Common myeloid progenitor, CD34-positive (primary cell): ENCODE measurements at regions of chr3 and their contacts with region 1.

Region 1: GRCh38 chr3:36957862-36958686 is 13.2 kb upstream of the TRANK1 start:
- DNase-seq: peak in 2 of 3 donors; percentile 25 to 40
- H3K4me3 ChIP-seq: no peak overlapping the region
- H3K27ac ChIP-seq: peak overlapping the region in 1 of 2 experiments; percentile 62
- H3K4me1 ChIP-seq: peaks cover 0 to 8% (median 2%) of the 10 kb centered on the region in 4 experiments
- H3K27me3 ChIP-seq: no peaks in the 10 kb centered on the region

Region 2: DNA sequence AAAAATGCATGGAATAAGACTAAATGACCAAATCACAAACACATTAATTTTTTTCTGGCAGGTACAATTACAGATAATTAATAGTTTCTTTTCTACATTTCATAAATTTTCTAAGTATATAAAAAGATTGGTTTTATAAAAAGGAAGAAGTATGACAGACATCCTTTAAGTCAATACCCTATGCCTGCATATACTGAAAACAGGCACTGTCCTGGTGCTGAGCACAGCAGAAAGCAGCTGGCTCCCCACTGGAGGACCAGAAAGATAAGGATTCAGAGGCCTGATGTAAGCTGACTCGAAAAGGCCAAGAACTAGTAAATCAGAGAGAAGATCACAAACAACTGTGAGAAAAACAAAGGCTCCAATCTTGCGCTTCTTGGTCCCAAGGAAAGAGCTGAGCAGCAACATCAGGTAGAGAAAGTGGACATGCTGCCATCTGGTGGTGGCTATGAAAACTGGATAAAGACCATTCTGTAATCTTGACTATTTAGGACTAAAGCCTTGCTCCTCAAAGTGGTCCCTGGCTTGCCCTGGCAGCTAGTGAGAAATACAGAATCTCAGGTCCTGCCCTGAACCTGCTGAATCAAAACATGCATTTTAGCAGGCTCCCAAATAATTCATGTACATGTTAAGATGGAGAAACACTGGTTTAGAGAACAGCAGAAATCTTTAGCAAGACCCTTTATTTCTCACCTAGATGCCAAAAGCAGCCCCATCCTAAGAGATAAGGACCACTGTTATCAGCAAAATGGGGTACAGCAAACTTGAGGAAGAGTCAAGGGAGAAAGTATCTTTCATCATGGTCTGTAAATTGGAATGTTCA is 89.2 kb before region 1 on chr3:
- CTCF ChIA-PET with region 1: interaction called, 12 read pairs
- POLR2A ChIA-PET with region 1: no interaction called
- DNase-seq: peak; percentile 65 to 84 (median 73)
- H3K4me3 ChIP-seq: no peak overlapping the region
- H3K27ac ChIP-seq: no peak overlapping the region
- H3K4me1 ChIP-seq: peaks cover 5 to 18% (median 10%) of the 10 kb centered on the region in 4 experiments
- H3K27me3 ChIP-seq: no peaks in the 10 kb centered on the region

Region 3: DNA sequence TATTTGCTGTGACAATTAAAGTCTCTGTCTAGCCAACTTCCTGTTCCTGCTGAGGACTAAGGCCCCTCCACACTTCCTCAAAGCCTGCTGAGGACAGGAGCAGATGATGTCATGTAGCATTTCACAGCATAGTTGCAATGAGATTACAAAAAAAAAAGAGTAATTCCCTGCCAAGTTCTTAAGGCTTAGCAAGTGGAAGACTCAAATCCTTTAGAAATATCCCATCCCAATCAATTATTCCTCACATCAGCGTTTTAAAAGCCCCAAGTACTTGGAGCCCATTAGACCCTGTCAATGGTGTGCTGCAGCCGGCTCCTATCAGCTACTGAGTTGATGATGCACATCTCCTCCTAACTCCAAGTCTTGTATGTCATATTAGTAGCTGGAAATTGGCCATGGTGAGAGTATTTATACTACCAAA is 64.9 kb before region 1 on chr3:
- CTCF ChIA-PET with region 1: interaction called, 14 read pairs
- POLR2A ChIA-PET with region 1: no interaction called
- DNase-seq: peak; percentile 47 to 84 (median 73)
- H3K4me3 ChIP-seq: no peak overlapping the region
- H3K27ac ChIP-seq: peak overlapping the region in 1 of 2 experiments; percentile 45
- H3K4me1 ChIP-seq: peaks cover 8 to 28% (median 17%) of the 10 kb centered on the region in 4 experiments
- H3K27me3 ChIP-seq: no peaks in the 10 kb centered on the region

Region 4: GRCh38 chr3:36911990-36912804 is 45.9 kb before region 1 on chr3:
- CTCF ChIA-PET with region 1: interaction called, 92 read pairs
- POLR2A ChIA-PET with region 1: interaction called, 5 read pairs
- DNase-seq: peak; percentile 84 to 97 (median 94)
- H3K4me3 ChIP-seq: peak overlapping the region in 6 of 7 experiments; percentile 38 to 71 (median 48)
- H3K27ac ChIP-seq: peak overlapping the region; percentile 47 to 84
- H3K4me1 ChIP-seq: peaks cover 29 to 43% (median 36%) of the 10 kb centered on the region in 4 experiments
- H3K27me3 ChIP-seq: no peaks in the 10 kb centered on the region

Region 5: GRCh38 chr3:36923523-36923943 is 34.5 kb before region 1 on chr3:
- CTCF ChIA-PET with region 1: interaction called, 39 read pairs
- POLR2A ChIA-PET with region 1: no interaction called
- DNase-seq: peak in 2 of 3 donors; percentile 34 to 63
- H3K4me3 ChIP-seq: peak overlapping the region; percentile 12 to 85 (median 58)
- H3K27ac ChIP-seq: peak overlapping the region; percentile 69 to 88
- H3K4me1 ChIP-seq: peaks cover 18 to 46% (median 34%) of the 10 kb centered on the region in 4 experiments
- H3K27me3 ChIP-seq: no peaks in the 10 kb centered on the region

Region 6: GRCh38 chr3:36933540-36934296 is 24.4 kb before region 1 on chr3:
- CTCF ChIA-PET with region 1: interaction called, 31 read pairs
- POLR2A ChIA-PET with region 1: no interaction called
- DNase-seq: no peak
- H3K4me3 ChIP-seq: no peak overlapping the region
- H3K27ac ChIP-seq: no peak overlapping the region
- H3K4me1 ChIP-seq: peaks cover 0 to 7% (median 3%) of the 10 kb centered on the region in 4 experiments
- H3K27me3 ChIP-seq: no peaks in the 10 kb centered on the region

Region 7: DNA sequence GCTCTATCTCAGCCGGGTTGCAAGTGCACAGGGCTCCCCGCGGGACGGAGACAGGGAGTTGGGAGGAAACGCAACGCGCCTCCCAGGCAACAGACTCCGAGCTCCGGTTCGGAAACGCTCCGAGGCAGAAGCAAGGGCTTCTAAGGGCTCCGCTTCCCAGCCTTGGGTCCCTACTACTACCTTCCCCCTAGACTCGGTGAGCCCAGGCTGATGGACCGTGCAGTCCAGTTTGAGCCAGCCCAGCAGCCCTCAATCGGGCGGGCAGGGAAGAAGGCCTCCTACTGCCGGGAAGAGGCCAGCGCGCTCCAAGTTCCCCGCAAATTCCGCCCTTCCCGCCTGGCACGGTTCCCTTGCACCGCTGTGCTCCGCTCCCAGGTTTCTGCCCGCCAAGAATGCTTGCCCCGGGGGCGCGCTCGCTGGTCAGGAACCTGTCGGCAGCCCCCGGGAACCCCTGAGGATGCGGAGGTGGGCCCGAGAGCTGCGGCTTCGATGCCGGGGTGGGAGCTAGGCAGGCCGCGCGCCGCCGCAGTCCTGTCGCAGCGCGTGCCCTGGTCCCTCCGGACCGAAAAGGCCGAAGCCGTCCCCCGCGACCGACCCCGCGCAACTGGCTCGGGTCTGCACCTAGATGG is 13.9 kb before region 1 on chr3:
- CTCF ChIA-PET with region 1: interaction called, 33 read pairs
- POLR2A ChIA-PET with region 1: no interaction called
- DNase-seq: peak in 2 of 3 donors; percentile 60 to 72
- H3K4me3 ChIP-seq: peak overlapping the region; percentile 70 to 92 (median 84)
- H3K27ac ChIP-seq: peak overlapping the region; percentile 40 to 72
- H3K4me1 ChIP-seq: peaks cover 0 to 18% (median 16%) of the 10 kb centered on the region in 4 experiments
- H3K27me3 ChIP-seq: no peaks in the 10 kb centered on the region

Region 8: GRCh38 chr3:37071921-37072320 is 113.8 kb after region 1 on chr3:
- CTCF ChIA-PET with region 1: no interaction called
- POLR2A ChIA-PET with region 1: no interaction called
- DNase-seq: no peak
- H3K4me3 ChIP-seq: no peak overlapping the region
- H3K27ac ChIP-seq: peak overlapping the region in 1 of 2 experiments; percentile 26
- H3K4me1 ChIP-seq: peaks cover 7 to 30% (median 14%) of the 10 kb centered on the region in 4 experiments
- H3K27me3 ChIP-seq: no peaks in the 10 kb centered on the region